ENCODE measurements at regions of chr7 and their contacts with region 1.

Region 1: DNA sequence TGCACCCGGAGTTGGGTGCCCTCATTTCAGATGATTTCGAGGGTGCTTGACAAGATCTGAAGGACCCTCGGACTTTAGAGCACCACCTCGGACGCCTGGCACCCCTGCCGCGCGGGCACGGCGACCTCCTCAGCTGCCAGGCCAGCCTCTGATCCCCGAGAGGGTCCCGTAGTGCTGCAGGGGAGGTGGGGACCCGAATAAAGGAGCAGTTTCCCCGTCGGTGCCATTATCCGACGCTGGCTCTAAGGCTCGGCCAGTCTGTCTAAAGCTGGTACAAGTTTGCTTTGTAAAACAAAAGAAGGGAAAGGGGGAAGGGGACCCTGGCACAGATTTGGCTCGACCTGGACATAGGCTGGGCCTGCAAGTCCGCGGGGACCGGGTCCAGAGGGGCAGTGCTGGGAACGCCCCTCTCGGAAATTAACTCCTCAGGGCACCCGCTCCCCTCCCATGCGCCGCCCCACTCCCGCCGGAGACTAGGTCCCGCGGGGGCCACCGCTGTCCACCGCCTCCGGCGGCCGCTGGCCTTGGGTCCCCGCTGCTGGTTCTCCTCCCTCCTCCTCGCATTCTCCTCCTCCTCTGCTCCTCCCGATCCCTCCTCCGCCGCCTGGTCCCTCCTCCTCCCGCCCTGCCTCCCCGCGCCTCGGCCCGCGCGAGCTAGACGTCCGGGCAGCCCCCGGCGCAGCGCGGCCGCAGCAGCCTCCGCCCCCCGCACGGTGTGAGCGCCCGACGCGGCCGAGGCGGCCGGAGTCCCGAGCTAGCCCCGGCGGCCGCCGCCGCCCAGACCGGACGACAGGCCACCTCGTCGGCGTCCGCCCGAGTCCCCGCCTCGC is at the start of gene EGFR:
- DNase-seq: peak; percentile 94
- total RNA-seq, gene EGFR: 80.8 to 87.2 TPM

Region 2: DNA sequence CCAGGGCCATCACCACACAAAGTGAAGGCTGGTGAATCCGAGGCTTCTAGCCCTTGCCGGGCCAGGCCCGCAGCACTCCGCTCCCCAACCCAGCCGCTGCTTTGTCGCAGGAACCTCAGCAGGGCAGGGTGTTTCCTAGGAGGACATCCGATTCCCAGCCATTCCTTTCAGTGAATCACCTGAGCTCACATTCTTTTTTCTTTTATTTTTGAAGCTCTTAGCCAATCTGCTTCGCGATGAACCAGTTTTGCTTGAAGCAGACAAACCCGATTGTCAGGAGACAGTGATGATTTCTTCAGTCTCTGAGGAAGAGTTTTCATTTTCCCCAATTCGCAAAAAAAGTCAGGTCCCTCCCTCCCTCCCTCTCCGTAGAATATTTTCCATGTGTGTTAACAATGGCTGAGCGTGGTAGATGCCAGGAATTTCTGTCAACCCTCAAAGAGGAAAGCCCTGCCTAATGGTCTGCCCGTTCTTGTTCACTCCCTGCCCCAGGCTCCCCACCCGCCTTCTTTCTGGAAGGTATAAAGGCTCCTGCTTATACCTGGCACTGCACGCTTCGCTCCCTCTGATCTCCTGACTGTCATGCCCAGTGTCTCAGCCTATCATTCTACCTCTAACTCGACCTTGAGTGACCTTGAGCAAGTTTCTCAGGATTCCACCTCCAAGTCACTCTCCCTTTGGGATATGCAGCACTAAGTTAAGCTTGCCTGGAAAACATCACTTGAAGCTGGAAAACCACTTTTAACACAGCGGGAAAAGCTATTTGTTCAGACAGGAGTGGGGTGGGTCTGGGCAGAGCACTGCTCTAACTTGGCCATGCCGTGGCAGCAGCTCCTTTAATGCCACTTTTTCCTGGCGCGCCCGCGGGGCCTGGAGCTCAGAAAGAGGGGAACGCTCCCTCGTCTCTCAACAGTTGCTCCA is 35.3 kb after region 1 on chr7:
- intact Hi-C with region 1: loop called in 1 of 2 experiments (anchors 5 kb)
- DNase-seq: no peak

Region 3: GRCh38 chr7:55073945-55074499 is 55.4 kb after region 1 on chr7:
- intact Hi-C with region 1: loop called in 1 of 2 experiments (anchors 5 kb)
- DNase-seq: no peak

Region 4: DNA sequence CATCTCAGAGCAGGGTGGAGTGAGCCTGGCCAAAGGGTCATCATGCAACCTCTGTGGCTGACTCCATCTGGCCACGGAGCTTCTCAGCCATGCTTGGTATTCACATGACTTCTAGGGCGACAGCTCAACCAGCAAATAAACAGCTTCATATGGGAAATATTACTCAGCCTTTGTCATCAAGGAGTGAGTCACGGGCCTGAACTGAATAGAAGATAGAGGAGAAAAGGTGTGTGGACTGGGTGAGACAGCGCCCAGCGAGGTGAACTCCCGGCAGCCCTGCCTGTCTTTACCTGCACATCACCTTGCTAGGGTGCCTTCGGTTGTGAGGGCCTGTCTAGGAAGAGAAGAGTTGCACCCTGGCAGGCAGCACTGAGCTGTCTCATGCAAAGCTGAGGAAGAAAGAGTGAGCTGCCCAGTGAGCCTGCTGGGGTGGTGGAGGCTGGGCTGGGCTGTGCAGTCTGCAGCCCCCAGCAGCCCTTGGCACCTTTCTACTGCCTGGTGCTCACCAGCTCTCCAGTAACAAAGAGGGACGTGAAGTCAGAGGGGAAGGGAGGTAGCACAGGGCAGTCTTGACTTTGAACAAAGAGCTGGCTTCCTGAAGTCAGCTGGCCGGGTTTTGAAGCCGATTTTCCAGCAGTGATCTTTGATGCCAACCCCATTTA is 114.4 kb after region 1 on chr7:
- intact Hi-C with region 1: loop called in 1 of 2 experiments (anchors 2 kb)
- DNase-seq: peak; percentile 91

Measured in posterior vena cava (tissue), 2 donors.